ENCODE measurements at regions of chr1 and their contacts with region 1.

Region 1: GRCh38 chr1:70536708-70537366 is 125.8 kb downstream of the CTH start:
- DNase-seq: no peak
- ATAC-seq: no peak
- H3K4me3 ChIP-seq: no peak overlapping the region
- H3K27ac ChIP-seq: no peak overlapping the region
- H3K4me1 ChIP-seq: no peaks in the 10 kb centered on the region
- H3K27me3 ChIP-seq: peaks cover 0 to 16% (median 4%) of the 10 kb centered on the region in 7 donors
- CTCF ChIP-seq: no peak

Region 2: GRCh38 chr1:70675737-70676156 is 138.9 kb after region 1 on chr1:
- intact Hi-C with region 1: loop called in 1 of 10 experiments (anchors 10 kb)
- DNase-seq: no peak
- ATAC-seq: no peak
- H3K4me3 ChIP-seq: no peak overlapping the region
- H3K27ac ChIP-seq: no peak overlapping the region
- H3K4me1 ChIP-seq: peaks cover 0 to 11% (median 0%) of the 10 kb centered on the region in 9 donors
- H3K27me3 ChIP-seq: no peaks in the 10 kb centered on the region
- CTCF ChIP-seq: no peak

Measured in heart right ventricle (tissue), 16 donors.